Activated B cell treated with CpG ODN at 0.5 μM for 24 hours (primary cell): ENCODE measurements at regions of chr6 and their contacts with region 1.

Region 1: GRCh38 chr6:113306552-113307145 is 550.5 kb upstream of the MARCKS start:
- DNase-seq: peak; percentile 51
- ATAC-seq: peak; percentile 97
- H3K4me3 Mint-ChIP-seq: no peak overlapping the region
- H3K27ac Mint-ChIP-seq: no peak overlapping the region
- H3K4me1 Mint-ChIP-seq: peaks cover 6% of the 10 kb centered on the region
- H3K27me3 Mint-ChIP-seq: no peaks in the 10 kb centered on the region
- CTCF ChIP-seq: peak; percentile 31

Region 2: DNA sequence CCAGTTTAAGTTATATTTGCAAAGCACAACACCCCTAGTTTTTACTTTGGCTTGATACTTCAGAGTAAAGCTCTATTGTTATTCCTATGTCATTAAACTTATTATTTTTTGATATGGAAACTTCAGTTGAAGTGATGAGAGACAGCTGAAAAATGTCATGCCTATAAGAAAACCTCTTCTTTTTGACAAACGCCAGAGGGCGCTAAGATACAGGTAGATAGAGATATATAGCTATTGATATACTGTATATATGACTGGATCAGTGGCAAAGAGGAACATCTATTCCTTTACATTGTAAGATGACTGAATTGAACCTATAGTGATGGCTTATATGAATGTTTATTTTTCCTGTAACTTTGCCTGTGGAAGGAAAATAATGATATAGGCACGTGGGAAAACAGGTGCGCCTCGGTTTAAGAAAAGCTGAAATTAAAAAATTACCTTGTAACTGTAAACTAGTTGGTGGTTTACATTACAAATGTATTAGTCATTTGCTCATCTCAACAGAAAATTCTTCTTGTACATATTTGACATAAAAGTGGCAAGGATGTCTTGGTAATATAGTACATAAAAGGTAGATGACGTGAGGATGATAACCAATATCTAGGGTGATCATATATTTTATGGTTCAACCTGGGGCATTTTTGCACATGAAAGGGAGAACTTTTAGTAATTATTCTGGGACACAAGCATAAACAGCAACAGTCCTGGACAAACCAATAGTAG is 1126.4 kb before region 1 on chr6:
- CTCF ChIA-PET with region 1: interaction called, 4 read pairs
- POLR2A ChIA-PET with region 1: no interaction called
- intact Hi-C with region 1: loop called (anchors 2 kb)
- DNase-seq: no peak
- ATAC-seq: peak; percentile 57
- H3K4me3 Mint-ChIP-seq: no peak overlapping the region
- H3K27ac Mint-ChIP-seq: no peak overlapping the region
- H3K4me1 Mint-ChIP-seq: no peaks in the 10 kb centered on the region
- H3K27me3 Mint-ChIP-seq: peaks cover 12% of the 10 kb centered on the region
- CTCF ChIP-seq: no peak

Region 3: DNA sequence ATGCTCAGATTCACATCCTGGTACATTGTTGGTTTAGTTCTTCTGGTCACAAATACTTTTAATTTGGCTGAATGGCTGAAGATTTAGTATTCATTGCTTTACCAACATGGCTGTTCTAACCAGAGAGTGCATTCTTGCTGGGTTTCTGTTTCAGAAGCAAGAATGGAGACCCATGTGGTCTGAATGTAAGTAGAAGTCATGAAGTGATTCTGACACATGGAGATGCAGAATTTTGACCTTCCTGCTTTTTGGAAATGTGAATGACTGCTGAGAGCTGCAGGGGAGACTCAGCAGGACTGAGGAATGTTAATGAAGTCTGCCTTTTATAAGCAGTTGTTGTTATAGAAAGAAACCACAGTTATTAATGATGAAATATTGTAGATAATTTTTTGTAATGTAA is 25.6 kb before region 1 on chr6:
- CTCF ChIA-PET with region 1: no interaction called
- POLR2A ChIA-PET with region 1: no interaction called
- intact Hi-C with region 1: no loop called
- DNase-seq: no peak
- ATAC-seq: no peak
- H3K4me3 Mint-ChIP-seq: no peak overlapping the region
- H3K27ac Mint-ChIP-seq: no peak overlapping the region
- H3K4me1 Mint-ChIP-seq: no peaks in the 10 kb centered on the region
- H3K27me3 Mint-ChIP-seq: peaks cover 11% of the 10 kb centered on the region
- CTCF ChIP-seq: no peak

Region 4: GRCh38 chr6:113328886-113329381 is 22.3 kb after region 1 on chr6:
- CTCF ChIA-PET with region 1: no interaction called
- POLR2A ChIA-PET with region 1: no interaction called
- intact Hi-C with region 1: loop called (anchors 2 kb)
- DNase-seq: no peak
- ATAC-seq: no peak
- H3K4me3 Mint-ChIP-seq: no peak overlapping the region
- H3K27ac Mint-ChIP-seq: no peak overlapping the region
- H3K4me1 Mint-ChIP-seq: no peaks in the 10 kb centered on the region
- H3K27me3 Mint-ChIP-seq: no peaks in the 10 kb centered on the region
- CTCF ChIP-seq: no peak

Region 5: GRCh38 chr6:113767985-113768384 is 461.3 kb after region 1 on chr6:
- CTCF ChIA-PET with region 1: interaction called, 6 read pairs
- POLR2A ChIA-PET with region 1: no interaction called
- intact Hi-C with region 1: loop called (anchors 1 kb)
- DNase-seq: no peak
- ATAC-seq: peak; percentile 37
- H3K4me3 Mint-ChIP-seq: no peak overlapping the region
- H3K27ac Mint-ChIP-seq: no peak overlapping the region
- H3K4me1 Mint-ChIP-seq: peaks cover 11% of the 10 kb centered on the region
- H3K27me3 Mint-ChIP-seq: no peaks in the 10 kb centered on the region
- CTCF ChIP-seq: no peak

Region 6: DNA sequence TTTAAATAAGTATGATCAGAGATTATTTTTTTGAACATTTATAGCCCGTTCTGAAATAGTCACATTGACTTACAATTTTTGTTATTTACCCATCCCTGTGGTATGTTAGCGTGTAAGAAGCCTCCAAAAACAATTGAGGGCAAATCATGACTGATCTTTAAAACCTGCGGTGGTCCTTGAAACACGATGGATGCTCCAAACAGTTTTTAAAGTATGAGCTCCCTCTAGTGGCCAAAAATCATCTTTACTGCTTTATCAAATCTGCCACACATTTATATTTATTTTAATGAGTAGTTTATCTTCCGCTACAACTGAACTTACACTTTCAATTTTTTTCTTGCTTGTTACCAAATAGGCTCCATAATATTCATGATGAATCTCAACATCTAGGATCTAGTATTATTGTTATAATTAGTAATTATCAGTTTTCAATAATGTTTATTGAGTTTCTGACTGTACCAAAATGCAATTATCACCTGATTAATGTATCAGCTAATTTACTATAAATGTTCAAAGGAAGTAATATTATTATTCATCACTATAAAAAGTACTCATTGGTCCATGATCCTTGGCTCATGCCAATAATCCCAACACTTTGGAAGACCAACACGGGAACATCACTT is 602.7 kb after region 1 on chr6:
- CTCF ChIA-PET with region 1: interaction called, 6 read pairs
- POLR2A ChIA-PET with region 1: no interaction called
- intact Hi-C with region 1: loop called (anchors 1 kb)
- DNase-seq: no peak
- ATAC-seq: peak; percentile 37
- H3K4me3 Mint-ChIP-seq: no peak overlapping the region
- H3K27ac Mint-ChIP-seq: no peak overlapping the region
- H3K4me1 Mint-ChIP-seq: no peaks in the 10 kb centered on the region
- H3K27me3 Mint-ChIP-seq: peaks cover 2% of the 10 kb centered on the region
- CTCF ChIP-seq: peak; percentile 63